ENCODE measurements at regions of chr21 and their contacts with region 1.

Region 1: GRCh38 chr21:36282568-36283230 is 37.3 kb upstream of the MORC3 start:
- DNase-seq: no peak
- H3K4me3 ChIP-seq: no peak overlapping the region
- CTCF ChIP-seq: no peak
- POLR2A ChIP-seq: no peak

Region 2: DNA sequence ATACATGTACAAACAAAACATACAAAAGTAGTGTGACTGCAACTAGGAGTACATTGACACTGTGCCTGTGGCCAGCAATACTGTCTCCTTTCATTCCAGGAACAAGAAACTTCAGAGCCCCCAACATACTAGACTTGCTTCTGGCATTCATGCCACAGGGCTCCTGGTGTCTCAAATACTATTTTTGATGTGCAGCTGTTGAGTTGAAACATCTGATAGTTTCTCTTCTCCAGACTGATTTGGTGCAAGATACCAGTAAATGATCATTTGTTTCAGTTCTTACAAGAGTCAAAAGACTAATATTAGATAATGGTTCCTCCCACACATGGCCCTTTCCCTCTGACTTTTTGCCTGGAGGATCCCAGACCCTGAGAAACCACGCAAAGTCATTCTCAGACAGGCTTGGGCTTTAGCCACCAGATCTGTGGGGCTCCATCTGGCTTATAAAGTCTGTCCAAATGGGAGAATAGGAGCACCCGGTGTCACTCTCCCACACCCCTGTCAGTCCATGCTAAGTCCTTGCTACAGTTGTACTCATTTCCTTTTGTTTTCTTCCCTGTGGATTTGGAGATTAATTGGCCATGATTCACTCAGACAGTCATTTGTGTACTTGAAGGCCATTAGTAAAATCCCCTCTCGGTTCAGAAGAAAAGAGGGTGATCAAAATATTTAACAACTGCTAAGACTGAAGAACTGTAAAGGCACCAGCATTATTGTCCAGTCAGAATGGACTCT is 1070.1 kb before region 1 on chr21:
- intact Hi-C with region 1: loop called (anchors 5 kb)
- DNase-seq: no peak
- H3K4me3 ChIP-seq: no peak overlapping the region
- CTCF ChIP-seq: no peak
- POLR2A ChIP-seq: no peak

Measured in lower leg skin (tissue), 4 donors.